ENCODE measurements at regions of chr2 and their contacts with region 1.

Region 1: GRCh38 chr2:190267302-190267701 is 52.3 kb downstream of the HIBCH start:
- DNase-seq: peak; percentile 92
- ATAC-seq: peak; percentile 86
- H3K4me3 ChIP-seq: no peak overlapping the region
- H3K27ac ChIP-seq: peak overlapping the region; percentile 33; the same call in 1 of the 2 replicates
- H3K4me1 ChIP-seq: peaks cover 5% of the 10 kb centered on the region
- H3K27me3 ChIP-seq: no peaks in the 10 kb centered on the region; the same call in 1 of the 2 replicates
- CTCF ChIP-seq: no peak
- POLR2A ChIP-seq: no peak
- RAD21 ChIP-seq: no peak

Region 2: DNA sequence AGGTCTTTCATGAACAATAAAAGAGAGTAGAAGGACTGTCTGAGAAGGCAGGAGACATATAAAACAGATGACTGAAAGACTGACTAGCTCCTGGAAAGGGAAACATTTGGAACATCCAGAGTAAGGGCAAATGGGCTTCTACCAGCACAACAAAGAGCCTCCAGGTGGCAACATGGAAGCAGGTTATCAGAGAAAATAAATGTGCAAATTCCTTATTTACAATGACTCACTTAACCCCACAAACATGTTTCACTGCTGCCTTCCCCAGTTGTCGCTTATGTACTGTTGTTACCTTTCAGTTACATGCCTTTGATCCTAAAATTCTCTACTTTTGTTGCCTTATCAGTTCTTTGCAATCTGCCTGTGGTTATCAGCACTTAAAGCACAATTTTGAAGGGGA is 64.7 kb before region 1 on chr2:
- CTCF ChIA-PET with region 1: interaction called, 3 read pairs
- POLR2A ChIA-PET with region 1: no interaction called
- dilution Hi-C with region 1: no loop called
- in situ Hi-C with region 1: no loop called
- intact Hi-C with region 1: loop called (anchors 5 kb)
- DNase-seq: no peak
- ATAC-seq: no peak
- H3K4me3 ChIP-seq: no peak overlapping the region
- H3K27ac ChIP-seq: no peak overlapping the region
- H3K4me1 ChIP-seq: no peaks in the 10 kb centered on the region
- H3K27me3 ChIP-seq: no peaks in the 10 kb centered on the region
- CTCF ChIP-seq: no peak
- POLR2A ChIP-seq: no peak
- RAD21 ChIP-seq: no peak

Region 3: GRCh38 chr2:190328573-190329147 is 61.4 kb after region 1 on chr2:
- CTCF ChIA-PET with region 1: no interaction called
- POLR2A ChIA-PET with region 1: no interaction called
- dilution Hi-C with region 1: no loop called
- in situ Hi-C with region 1: no loop called
- intact Hi-C with region 1: no loop called
- DNase-seq: peak; percentile 33
- ATAC-seq: peak; percentile 44
- H3K4me3 ChIP-seq: no peak overlapping the region
- H3K27ac ChIP-seq: no peak overlapping the region
- H3K4me1 ChIP-seq: no peaks in the 10 kb centered on the region
- H3K27me3 ChIP-seq: no peaks in the 10 kb centered on the region
- CTCF ChIP-seq: peak; percentile 36
- POLR2A ChIP-seq: no peak
- RAD21 ChIP-seq: peak; percentile 22; the same call in 1 of the 2 replicates